ENCODE measurements at regions of chr12 and their contacts with region 1.

Region 1: GRCh38 chr12:65685514-65685913 is 138.8 kb upstream of the HMGA2 start:
- DNase-seq: peak; percentile 65
- H3K4me3 ChIP-seq: no peak overlapping the region
- H3K27ac ChIP-seq: no peak overlapping the region
- H3K4me1 ChIP-seq: no peaks in the 10 kb centered on the region
- H3K27me3 ChIP-seq: no peaks in the 10 kb centered on the region
- CTCF ChIP-seq: peak; percentile 74

Region 2: DNA sequence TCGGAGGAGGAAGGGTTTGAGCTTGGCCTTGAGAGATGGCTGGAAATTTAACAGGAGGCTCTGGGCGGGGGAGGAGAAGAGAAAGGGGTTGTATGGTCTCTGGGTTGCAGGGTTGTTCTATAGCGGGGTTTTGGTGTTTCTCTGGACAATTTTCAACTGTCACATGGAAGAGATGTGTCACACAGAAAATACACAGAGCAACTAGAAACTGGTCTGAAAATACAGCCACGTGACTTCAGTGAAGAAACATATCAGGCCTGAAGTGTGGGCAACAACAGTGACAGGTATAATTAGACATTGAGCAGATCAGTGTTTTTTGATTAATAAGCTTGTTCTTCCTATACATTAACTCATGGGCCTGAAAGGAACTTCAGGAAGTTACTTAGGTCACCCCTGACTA is 66.5 kb before region 1 on chr12:
- CTCF ChIA-PET with region 1: interaction called, 10 read pairs
- POLR2A ChIA-PET with region 1: no interaction called
- intact Hi-C with region 1: no loop called
- DNase-seq: no peak
- H3K4me3 ChIP-seq: no peak overlapping the region
- H3K27ac ChIP-seq: no peak overlapping the region
- H3K4me1 ChIP-seq: peaks cover 8% of the 10 kb centered on the region
- H3K27me3 ChIP-seq: no peaks in the 10 kb centered on the region
- CTCF ChIP-seq: no peak

Region 3: GRCh38 chr12:65941388-65941787 is 255.9 kb after region 1 on chr12:
- CTCF ChIA-PET with region 1: no interaction called
- POLR2A ChIA-PET with region 1: no interaction called
- intact Hi-C with region 1: no loop called
- DNase-seq: no peak
- H3K4me3 ChIP-seq: no peak overlapping the region
- H3K27ac ChIP-seq: peak overlapping the region; percentile 26
- H3K4me1 ChIP-seq: peaks cover 66% of the 10 kb centered on the region
- H3K27me3 ChIP-seq: no peaks in the 10 kb centered on the region
- CTCF ChIP-seq: no peak